ENCODE measurements at regions of chr2 and their contacts with region 1.

Region 1: DNA sequence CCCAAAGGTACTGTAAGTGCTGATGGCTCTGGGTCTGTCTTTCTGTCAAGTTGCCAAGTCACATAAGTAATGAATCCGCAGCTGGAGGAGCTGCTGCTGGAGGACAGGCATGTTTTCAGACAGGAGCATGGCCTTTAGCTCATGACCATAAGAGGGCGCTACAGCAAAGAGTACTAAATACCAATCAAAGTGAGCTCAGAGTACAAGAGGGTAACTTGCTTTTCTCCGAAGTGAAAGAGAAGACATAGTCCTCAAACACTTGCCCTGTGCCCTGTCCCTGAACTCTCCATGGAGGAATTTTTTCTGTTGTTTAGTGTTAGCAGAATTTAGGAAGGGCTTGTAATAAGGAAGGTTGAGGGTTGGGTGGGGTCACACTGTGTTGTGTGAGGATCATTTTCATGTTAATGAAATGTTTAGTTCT is 58.0 kb upstream of the EML6 start:
- H3K4me3 Mint-ChIP-seq: no peak overlapping the region
- H3K27ac Mint-ChIP-seq: no peak overlapping the region
- H3K4me1 Mint-ChIP-seq: peaks cover 29% of the 10 kb centered on the region
- H3K27me3 Mint-ChIP-seq: peaks cover 1% of the 10 kb centered on the region

Region 2: GRCh38 chr2:54522624-54523281 is 142.7 kb before region 1 on chr2:
- intact Hi-C with region 1: loop called (anchors 1 kb)
- H3K4me3 Mint-ChIP-seq: no peak overlapping the region
- H3K27ac Mint-ChIP-seq: no peak overlapping the region
- H3K4me1 Mint-ChIP-seq: peaks cover 17% of the 10 kb centered on the region
- H3K27me3 Mint-ChIP-seq: peaks cover 6% of the 10 kb centered on the region

Region 3: DNA sequence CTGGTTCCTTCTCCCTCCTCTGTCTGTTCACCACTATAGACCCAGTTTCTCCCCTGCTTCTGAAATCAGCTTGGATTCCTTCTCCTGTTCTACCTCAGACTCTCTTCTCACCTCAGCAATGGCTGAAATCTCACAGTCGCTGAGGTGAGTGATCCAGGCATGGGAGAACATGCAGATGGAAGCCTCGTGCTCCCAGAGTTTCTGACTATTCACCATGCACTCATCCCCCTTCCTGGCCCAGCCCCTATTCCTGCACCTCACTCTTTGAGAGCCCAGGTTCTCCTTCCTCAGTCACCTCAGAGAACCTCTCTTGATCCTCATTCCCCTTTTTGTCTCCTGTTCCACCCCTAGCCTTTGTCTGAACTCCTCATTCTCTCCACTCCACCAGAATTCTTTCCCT is 130.8 kb before region 1 on chr2:
- intact Hi-C with region 1: no loop called
- H3K4me3 Mint-ChIP-seq: no peak overlapping the region
- H3K27ac Mint-ChIP-seq: no peak overlapping the region
- H3K4me1 Mint-ChIP-seq: peaks cover 28% of the 10 kb centered on the region
- H3K27me3 Mint-ChIP-seq: peaks cover 24% of the 10 kb centered on the region

Measured in dendritic cell treated with granulocyte-macrophage colony-stimulating factor and Interleukin-4, amounts not matched to agents 40 ng/mL and 50 ng/mL, for 4 days (primary cell).